ENCODE measurements at regions of chr12 and their contacts with region 1.

Region 1: GRCh38 chr12:67452119-67452805 is 183.1 kb downstream of the CAND1 start:
- DNase-seq: no peak
- H3K4me3 ChIP-seq: no peak overlapping the region
- H3K27ac ChIP-seq: no peak overlapping the region
- H3K4me1 ChIP-seq: peaks cover 9 to 14% of the 10 kb centered on the region in 2 donors
- H3K27me3 ChIP-seq: no peaks in the 10 kb centered on the region
- CTCF ChIP-seq: no peak
- POLR2A ChIP-seq: no peak

Region 2: DNA sequence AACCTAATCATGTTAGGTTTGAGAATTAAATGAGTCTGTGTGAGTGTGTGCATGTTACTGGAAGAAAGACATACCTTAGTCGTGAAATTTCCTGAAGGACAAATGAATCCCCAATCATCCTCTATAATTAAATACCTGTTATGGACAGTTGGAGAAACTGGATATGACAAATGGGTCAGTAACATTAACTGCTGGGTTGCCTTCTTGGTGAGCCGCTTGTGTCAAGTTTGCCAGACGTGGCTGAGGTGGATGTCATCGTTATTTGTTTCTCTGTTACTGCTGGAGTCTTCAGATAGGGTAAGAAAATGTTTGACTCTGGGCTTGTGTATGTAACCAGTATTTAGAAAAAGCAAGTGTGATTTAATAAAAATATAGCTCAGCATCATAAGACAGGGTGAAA is 51.5 kb before region 1 on chr12:
- intact Hi-C with region 1: no loop called
- DNase-seq: no peak
- H3K4me3 ChIP-seq: no peak overlapping the region
- H3K27ac ChIP-seq: no peak overlapping the region
- H3K4me1 ChIP-seq: no peaks in the 10 kb centered on the region
- H3K27me3 ChIP-seq: no peaks in the 10 kb centered on the region
- CTCF ChIP-seq: no peak
- POLR2A ChIP-seq: no peak

Region 3: DNA sequence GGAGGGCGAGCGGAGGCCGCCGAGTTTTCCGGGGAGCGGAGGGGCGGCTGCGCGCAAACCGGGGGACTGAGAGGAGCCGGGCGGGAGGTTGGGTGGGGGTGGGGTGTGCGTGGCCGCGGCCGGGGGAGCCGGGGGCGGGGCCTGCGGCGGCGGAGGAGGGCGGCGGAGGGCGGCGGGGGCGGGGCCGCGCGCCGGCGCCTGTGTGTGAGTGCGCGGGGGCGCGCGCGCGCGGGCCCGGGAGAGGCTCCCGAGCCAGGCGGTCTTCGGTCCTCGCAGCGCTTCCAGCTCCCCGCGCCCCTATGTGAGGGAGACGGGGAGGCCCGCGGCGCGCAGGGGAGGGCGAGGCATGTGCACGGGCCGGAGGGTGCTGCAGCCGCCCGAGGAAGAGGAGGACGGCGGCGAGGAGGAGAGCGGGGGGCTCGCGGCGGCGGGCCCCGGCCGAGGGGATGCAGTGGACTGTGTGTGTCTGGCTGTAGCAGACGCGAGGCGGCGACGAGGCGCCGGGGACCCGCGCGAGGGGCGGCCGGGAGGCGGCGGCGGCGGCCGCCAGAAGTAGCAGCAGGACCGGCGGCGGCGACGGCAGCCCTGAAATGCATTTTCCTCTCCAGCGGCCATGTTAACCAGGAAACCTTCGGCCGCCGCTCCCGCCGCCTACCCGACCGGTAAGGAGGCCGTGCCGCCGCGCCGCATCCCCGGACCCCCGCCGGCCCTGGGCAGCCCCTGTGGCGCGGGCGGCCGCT is 196.4 kb after region 1 on chr12 and contains the start of gene DYRK2:
- intact Hi-C with region 1: loop called (anchors 5 kb)
- DNase-seq: peak; percentile 80 to 82
- H3K4me3 ChIP-seq: peak within 1 kb of the TSS; percentile 87 to 95 (median 90)
- H3K27ac ChIP-seq: peak within 1 kb of the TSS; percentile 87 to 94 (median 90)
- H3K4me1 ChIP-seq: peaks cover 20 to 22% of the 10 kb centered on the region in 2 donors
- H3K27me3 ChIP-seq: no peaks in the 10 kb centered on the region
- CTCF ChIP-seq: peak in 1 of 6 experiments; percentile 10
- POLR2A ChIP-seq: peak; percentile 63 to 84
- total RNA-seq, gene DYRK2: 17.2 to 41.9 (median 19.6) TPM

Region 4: DNA sequence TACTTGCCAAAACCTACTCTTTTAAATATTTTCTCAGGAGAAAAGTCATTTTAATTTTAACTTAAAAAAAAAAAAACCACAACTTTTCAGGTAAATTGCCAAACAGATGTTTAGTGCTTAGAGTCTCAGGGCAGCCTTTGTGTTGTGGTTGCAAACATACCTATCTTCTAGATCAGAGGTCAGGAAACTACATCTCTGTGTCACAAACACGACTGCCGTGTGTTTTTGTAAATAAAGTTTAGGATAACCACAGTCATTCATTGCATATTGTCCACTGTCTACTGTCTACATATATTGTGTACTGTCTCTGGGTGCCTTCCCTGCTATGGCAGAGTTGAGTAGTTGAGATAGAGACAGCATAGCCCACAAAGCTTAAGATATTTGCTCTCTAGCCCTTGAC is 245.2 kb after region 1 on chr12:
- intact Hi-C with region 1: no loop called
- DNase-seq: no peak
- H3K4me3 ChIP-seq: no peak overlapping the region
- H3K27ac ChIP-seq: no peak overlapping the region
- H3K4me1 ChIP-seq: no peaks in the 10 kb centered on the region
- H3K27me3 ChIP-seq: no peaks in the 10 kb centered on the region
- CTCF ChIP-seq: no peak
- POLR2A ChIP-seq: no peak

Measured in thyroid gland (tissue), 4 donors.